ENCODE measurements at regions of chr4 and their contacts with region 1.

Region 1: DNA sequence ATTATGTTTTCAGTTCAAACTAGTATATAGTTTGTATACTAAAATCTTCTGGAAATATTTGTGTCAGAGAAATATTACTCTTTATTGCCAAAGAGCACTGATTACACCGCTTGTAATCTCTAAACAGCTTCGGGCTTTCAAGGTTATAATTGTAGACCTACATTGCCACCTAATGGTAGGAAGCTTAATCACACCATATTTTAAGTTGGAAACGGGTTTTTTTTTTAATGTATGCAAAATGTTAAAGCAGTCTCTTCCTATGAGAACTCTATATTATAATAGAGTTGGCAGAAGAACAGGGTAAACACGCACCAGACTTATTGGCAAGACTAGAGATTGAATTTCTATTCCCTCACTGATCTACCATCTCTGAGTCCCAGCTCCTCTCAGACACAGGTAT is 19.5 kb upstream of the NFXL1 start:
- DNase-seq: peak; percentile 63

Region 2: GRCh38 chr4:47669946-47670345 is 263.9 kb before region 1 on chr4:
- in situ Hi-C with region 1: loop called (anchors 10 kb)
- DNase-seq: no peak

Region 3: DNA sequence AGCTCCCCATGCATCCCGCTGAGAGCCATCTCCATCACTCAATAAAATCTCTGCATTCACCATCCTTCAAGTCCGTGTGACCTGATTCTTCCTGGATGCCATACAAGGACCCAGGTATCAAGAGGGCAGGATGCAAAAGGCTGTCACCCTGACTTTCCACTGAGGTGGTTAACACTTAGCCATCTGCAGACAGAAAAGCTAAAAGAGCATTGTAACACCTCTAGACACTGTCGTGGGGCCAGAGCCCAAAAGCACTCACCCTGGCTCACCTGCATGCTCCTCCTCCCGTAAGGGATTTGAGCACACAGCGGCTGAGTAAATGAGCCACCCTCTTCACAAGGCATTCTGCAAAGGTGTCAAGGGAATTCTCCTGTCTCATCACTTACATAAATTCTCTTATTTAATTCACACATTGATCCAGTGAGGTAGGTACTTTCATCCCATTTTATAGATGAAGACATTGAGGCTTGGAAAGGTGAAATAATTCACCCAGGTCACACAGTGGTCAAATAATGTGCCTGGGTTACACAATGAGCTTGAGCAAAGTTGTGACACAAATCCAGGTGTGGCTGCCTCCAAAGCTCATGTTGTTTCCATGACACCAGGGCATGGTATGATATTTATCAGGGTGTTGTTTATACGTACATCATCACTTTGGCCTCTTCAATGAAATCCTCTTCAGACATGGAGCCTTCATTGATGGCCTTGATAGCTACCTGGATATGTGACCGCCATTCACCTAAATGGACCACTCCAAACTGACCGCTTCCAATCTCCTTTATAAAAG is 152.2 kb after region 1 on chr4:
- in situ Hi-C with region 1: no loop called
- DNase-seq: no peak

Measured in SK-MEL-5 (cell line).